Posterior cingulate gyrus (tissue), 11 donors: ENCODE measurements at regions of chr1 and their contacts with region 1.

Region 1: DNA sequence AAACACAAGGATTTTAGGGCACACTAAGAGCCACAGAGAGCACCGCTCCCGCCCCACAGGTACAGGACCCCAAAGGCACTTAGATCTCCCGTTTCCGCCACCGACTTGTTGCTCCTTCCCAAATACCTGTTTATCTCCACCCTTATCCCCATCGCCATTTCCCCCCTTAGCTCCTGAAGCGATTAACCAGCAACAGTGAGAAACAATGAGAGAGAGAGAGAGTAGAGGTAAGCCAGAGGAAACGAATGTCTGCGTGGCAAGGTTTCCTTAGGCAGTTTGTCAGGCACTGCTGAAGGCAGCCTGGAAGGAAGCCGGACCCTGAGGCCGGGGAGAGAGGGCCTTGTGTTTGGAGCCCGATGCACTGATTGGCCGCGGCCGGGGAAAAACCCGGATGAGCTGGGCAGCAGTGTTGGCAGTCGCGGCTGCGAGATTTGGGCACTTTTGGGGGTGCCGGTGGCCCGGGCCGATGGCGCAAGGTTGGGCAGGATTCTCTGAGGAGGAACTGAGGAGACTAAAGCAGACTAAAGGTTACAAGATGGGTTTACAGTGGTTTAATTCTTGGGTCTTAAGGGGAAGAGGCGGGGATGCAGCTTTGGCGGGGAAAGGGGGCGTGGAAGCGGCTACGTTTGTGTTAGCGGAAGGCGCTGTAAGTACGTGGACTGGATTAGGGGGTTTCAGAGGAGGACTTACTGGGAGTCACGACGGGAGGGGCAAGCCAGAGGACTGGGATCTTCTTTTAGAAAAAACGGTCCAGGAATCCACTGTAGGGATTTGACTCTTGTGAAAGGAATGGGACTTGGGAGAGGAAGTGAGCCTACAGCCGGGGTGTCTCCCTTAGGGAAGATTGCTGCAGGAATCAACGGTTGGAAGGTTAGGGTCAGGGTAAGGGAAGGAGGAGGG is at the start of gene GORAB:
- DNase-seq: peak; percentile 85 to 98 (median 94)

Region 2: GRCh38 chr1:170074250-170075157 is 457.5 kb before region 1 on chr1 and contains the start of gene KIFAP3:
- intact Hi-C with region 1: loop called (anchors 10 kb)
- DNase-seq: peak; percentile 90 to 99 (median 94)